Right ventricle myocardium superior (tissue), 1 donor: ENCODE measurements at regions of chr10 and their contacts with region 1.

Region 1: DNA sequence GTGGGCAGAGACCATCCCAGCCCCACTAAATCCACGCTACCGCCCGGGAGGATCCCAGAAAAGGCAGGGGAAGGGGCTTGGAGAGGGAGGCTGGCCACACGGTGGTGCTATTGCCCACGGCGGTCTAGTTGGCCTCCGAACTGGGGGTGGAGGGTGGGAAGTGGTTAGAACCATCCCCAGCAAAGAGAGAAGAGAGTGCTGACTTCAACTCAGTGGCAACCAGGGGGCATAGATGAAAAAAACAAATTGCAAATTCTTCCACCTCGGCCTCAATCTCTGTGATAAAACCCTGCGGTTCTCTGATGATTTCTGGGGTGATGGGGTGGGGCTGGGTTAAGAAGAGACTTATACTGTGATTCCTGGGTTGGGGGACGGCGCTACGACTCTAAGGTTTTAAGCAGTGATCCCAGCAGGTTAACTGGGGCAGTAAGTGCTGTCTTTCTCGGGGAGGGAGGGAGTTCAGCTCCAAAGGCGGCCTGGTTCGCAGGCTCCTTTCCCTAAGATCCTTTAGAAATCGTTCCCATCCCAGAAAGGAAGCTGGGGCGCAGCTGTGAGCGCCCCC is 154.5 kb upstream of the LYZL2 start:
- DNase-seq: peak; percentile 92
- ATAC-seq: peak; percentile 88

Region 2: DNA sequence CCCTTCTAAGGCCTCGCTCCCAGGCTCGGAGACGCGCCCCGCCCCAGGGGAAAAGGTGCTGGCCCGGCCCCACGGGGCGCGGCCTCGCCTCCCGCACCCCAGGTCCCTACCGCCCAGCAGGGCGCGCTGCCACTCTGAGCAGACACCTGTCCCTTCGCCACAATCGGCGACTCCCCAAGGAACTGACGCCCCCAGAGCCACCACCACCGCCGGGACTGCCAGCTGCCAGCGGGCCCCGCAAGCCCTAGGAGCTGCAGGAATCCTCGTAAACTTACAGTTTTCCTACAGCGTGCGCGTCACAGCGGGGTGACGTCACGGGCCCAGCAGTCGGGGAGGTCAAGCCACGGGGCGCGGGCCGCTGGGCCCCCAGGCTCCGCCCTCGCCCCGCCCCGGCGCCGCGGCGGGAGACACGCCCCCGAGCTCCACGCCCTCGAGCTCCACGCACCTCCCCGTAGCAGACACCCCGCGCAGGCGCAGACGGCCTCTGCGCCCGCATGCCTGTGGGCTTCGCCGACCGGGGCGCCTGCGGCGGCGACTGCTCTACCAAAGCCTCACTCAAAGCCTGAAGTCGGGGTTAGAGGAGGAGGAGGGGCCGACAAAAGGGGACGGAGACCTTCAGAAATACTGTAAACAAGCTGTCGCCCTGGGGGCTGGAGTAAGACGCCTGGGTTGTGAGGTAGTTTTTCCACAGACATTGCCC is 247.7 kb after region 1 on chr10 and contains the start of gene ZNF438:
- intact Hi-C with region 1: loop called (anchors 2 kb)
- DNase-seq: peak; percentile 98
- ATAC-seq: peak; percentile 98
- total RNA-seq, gene ZNF438: 13.0 TPM

Region 3: DNA sequence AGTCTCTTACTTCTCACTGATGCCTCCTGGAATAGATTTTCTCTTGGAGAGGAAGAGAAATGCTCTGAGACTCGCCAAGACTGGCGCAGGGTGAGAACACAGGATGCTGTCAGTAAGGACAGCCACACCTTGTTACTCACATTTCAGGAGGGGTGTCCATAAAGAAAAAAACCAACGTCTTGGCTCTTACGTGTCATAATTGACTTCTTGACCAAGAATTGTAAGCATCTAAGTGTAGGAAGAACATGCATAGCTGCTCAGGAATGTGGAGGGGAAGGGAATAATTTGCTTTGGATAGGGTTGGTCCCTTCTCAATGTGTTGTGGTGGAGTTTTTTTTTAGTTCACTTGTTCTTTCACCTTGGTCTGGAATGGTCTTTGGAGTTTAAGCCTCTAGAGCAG is 291.4 kb after region 1 on chr10:
- intact Hi-C with region 1: loop called (anchors 10 kb)
- DNase-seq: no peak
- ATAC-seq: no peak

Region 4: GRCh38 chr10:31320550-31321211 is 536.7 kb after region 1 on chr10:
- intact Hi-C with region 1: loop called (anchors 5 kb)
- DNase-seq: peak; percentile 62
- ATAC-seq: peak; percentile 37